ENCODE measurements at regions of chr5 and their contacts with region 1.

Region 1: GRCh38 chr5:33433303-33434240 is 7.2 kb upstream of the TARS1 start:
- DNase-seq: no peak
- ATAC-seq: no peak

Region 2: GRCh38 chr5:33934176-33934575 is 500.6 kb after region 1 on chr5:
- intact Hi-C with region 1: loop called (anchors 2 kb)
- DNase-seq: no peak
- ATAC-seq: no peak

Measured in Right ventricle myocardium inferior (tissue), 1 donor.